Pancreas (tissue), 10 donors: ENCODE measurements at regions of chr9 and their contacts with region 1.

Region 1: GRCh38 chr9:19085295-19085694 is 17.4 kb downstream of the HAUS6 start:
- DNase-seq: no peak
- ATAC-seq: peak in 3 of 4 donors; percentile 67 to 73 (median 69)
- H3K4me3 ChIP-seq: no peak overlapping the region
- H3K27ac ChIP-seq: no peak overlapping the region
- H3K4me1 ChIP-seq: no peaks in the 10 kb centered on the region
- H3K27me3 ChIP-seq: no peaks in the 10 kb centered on the region
- CTCF ChIP-seq: no peak

Region 2: DNA sequence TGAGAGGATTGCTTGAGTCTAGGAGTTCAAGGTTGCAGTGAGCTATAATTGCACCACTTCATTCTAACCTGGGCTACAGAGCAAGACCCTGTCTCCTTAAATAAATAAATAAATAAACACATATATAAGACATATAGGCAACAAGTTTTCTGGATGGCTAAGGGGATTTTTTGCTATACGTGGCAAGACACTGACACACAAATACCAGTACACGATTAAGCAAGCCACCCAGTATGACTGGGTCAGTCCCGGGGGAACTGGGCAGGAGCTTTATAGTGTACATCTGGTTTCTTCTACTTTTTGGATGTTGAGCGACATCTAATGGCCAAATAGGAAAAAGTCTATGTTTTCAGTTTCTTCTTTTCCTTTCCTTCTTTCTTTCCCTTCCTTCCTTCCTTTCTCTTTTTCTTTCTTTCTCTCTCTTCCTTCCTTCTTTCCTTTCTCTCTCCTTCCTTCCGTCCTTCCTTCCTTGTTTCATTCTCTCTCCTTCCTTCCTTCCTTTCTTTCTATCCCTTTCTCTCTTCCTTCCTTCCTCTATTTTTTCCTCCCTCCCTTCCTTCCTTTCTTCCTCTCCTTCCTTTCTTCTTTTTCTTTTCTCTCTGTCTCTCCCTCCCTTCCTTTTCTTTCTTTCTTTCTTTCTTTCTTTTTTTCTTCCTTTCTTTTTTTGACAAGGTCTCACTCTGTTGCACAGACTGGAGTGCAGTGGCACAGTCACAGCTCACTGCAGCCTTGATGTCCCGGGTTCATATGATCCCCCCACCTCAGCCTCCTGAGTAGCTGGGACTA is 89.0 kb after region 1 on chr9:
- intact Hi-C with region 1: loop called in 1 of 3 experiments (anchors 10 kb)
- DNase-seq: peak in 3 of 6 donors; percentile 18 to 47 (median 42)
- ATAC-seq: peak; percentile 77 to 94 (median 92)
- H3K4me3 ChIP-seq: no peak overlapping the region
- H3K27ac ChIP-seq: peak overlapping the region in 1 of 4 donors; percentile 3
- H3K4me1 ChIP-seq: peaks cover 0 to 8% (median 8%) of the 10 kb centered on the region in 3 donors
- H3K27me3 ChIP-seq: no peaks in the 10 kb centered on the region
- CTCF ChIP-seq: peak in 3 of 4 donors; percentile 27 to 33 (median 29)